RWPE1 (cell line): ENCODE measurements at regions of chr5 and their contacts with region 1.

Region 1: GRCh38 chr5:145825751-145826180 is 9.4 kb downstream of the PRELID2 start:
- DNase-seq: peak; percentile 70
- H3K27ac ChIP-seq: no peak overlapping the region
- CTCF ChIP-seq: peak; percentile 88

Region 2: DNA sequence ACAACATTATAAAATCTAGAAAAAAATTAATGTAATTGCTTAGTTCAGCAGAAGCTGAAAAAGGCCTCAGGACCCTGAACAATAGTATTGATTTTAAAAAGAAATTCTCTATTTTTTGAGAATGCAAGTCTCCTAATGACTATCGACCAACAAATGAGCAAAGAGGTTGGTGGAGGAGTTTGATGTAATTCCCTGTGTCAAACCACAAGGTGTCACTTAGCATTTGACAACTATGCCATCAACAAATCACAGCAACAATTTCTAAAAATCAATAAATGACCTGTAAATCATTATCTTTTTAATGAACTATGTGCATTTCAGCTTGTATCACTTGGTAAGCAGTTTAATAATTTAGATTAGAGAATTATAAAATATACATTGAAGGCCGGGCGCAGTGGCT is 124.4 kb before region 1 on chr5:
- CTCF ChIA-PET with region 1: interaction called, 11 read pairs
- POLR2A ChIA-PET with region 1: no interaction called
- DNase-seq: no peak
- H3K27ac ChIP-seq: no peak overlapping the region
- CTCF ChIP-seq: no peak

Region 3: GRCh38 chr5:145925353-145925752 is 99.6 kb after region 1 on chr5:
- CTCF ChIA-PET with region 1: no interaction called
- POLR2A ChIA-PET with region 1: no interaction called
- DNase-seq: peak; percentile 74
- H3K27ac ChIP-seq: no peak overlapping the region
- CTCF ChIP-seq: no peak